WTC11 (cell line): ENCODE measurements at regions of chr14 and their contacts with region 1.

Region 1: DNA sequence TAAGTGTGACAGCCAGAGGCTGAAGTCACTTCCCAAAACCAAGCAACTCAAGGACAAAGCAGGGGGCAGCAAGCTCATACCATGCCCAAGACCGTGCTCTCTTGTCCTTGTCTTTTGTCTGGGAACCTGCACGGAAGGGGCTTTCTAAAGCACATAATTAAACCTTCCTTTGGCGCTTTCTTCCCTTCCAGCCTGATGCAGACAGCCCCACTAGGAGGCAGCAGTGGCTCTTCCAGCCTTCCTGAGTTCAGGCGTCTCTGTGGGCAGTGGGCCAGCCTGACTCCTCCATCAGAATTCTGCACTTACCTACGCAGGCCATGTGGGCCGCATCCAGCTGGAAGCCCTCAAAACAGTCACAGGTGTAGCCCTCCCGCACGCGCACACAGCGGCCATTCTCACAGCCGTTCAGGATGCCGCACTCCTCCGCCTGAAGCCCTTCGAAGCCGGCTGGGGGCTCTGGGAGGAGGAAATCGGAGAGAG is 7.6 kb downstream of the ISCA2 start:
- DNase-seq: peak; percentile 79
- ATAC-seq: peak; percentile 87
- H3K4me3 Mint-ChIP-seq: no peak overlapping the region
- H3K27ac Mint-ChIP-seq: peak overlapping the region; percentile 91
- H3K4me1 Mint-ChIP-seq: peaks cover 34% of the 10 kb centered on the region
- H3K27me3 Mint-ChIP-seq: no peaks in the 10 kb centered on the region
- CTCF ChIP-seq: 0 out of 2 replicates have a peak, but pooled peaks have one; percentile 29

Region 2: DNA sequence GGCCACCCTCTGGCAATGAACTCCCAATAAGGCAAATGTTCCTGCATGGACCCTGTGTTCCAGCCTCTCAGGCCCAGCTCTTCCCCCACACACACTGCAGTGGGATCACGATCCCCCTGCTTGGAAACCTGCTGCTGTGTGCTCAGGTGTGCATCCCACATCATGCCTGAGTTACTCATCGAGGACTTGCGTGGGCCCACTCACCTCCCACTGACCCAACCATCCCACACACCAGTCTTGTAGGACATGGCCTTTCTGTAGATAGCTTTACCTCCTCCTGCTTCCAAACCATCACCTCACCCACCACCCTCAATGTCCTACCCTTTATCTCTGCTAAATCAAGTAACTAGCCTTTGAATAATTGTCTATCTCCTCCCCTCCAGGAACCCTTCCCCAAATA is 32.7 kb before region 1 on chr14:
- CTCF ChIA-PET with region 1: no interaction called
- POLR2A ChIA-PET with region 1: no interaction called
- DNase-seq: no peak
- ATAC-seq: no peak
- H3K4me3 Mint-ChIP-seq: no peak overlapping the region
- H3K27ac Mint-ChIP-seq: no peak overlapping the region
- H3K4me1 Mint-ChIP-seq: 0 out of 2 replicates have a peak, but pooled peaks cover 2% of the 10 kb centered on the region
- H3K27me3 Mint-ChIP-seq: no peaks in the 10 kb centered on the region
- CTCF ChIP-seq: no peak

Region 3: GRCh38 chr14:74478996-74479635 is 22.1 kb before region 1 on chr14:
- CTCF ChIA-PET with region 1: interaction called, 10 read pairs
- POLR2A ChIA-PET with region 1: no interaction called
- DNase-seq: no peak
- ATAC-seq: peak; percentile 77
- H3K4me3 Mint-ChIP-seq: no peak overlapping the region
- H3K27ac Mint-ChIP-seq: no peak overlapping the region
- H3K4me1 Mint-ChIP-seq: peaks cover 5% of the 10 kb centered on the region
- H3K27me3 Mint-ChIP-seq: no peaks in the 10 kb centered on the region
- CTCF ChIP-seq: peak; percentile 78

Region 4: GRCh38 chr14:74516451-74517155 is 15.4 kb after region 1 on chr14:
- CTCF ChIA-PET with region 1: interaction called, 14 read pairs
- POLR2A ChIA-PET with region 1: interaction called, 3 read pairs
- DNase-seq: peak; percentile 57
- ATAC-seq: peak; percentile 79
- H3K4me3 Mint-ChIP-seq: no peak overlapping the region
- H3K27ac Mint-ChIP-seq: no peak overlapping the region
- H3K4me1 Mint-ChIP-seq: peaks cover 20% of the 10 kb centered on the region
- H3K27me3 Mint-ChIP-seq: no peaks in the 10 kb centered on the region; the same call in 1 of the 2 replicates
- CTCF ChIP-seq: no peak

Region 5: GRCh38 chr14:74525361-74525851 is 24.2 kb after region 1 on chr14:
- CTCF ChIA-PET with region 1: interaction called, 25 read pairs
- POLR2A ChIA-PET with region 1: no interaction called
- DNase-seq: no peak
- ATAC-seq: no peak
- H3K4me3 Mint-ChIP-seq: no peak overlapping the region
- H3K27ac Mint-ChIP-seq: no peak overlapping the region
- H3K4me1 Mint-ChIP-seq: peaks cover 4% of the 10 kb centered on the region
- H3K27me3 Mint-ChIP-seq: no peaks in the 10 kb centered on the region
- CTCF ChIP-seq: no peak